HEK293 (cell line): ENCODE measurements at regions of chr1 and their contacts with region 1.

Region 1: GRCh38 chr1:110209715-110210603 is at the start of gene KCNC4:
- H3K4me3 ChIP-seq: peak within 1 kb of the TSS; percentile 56
- H3K27ac ChIP-seq: peak within 1 kb of the TSS; percentile 78
- H3K4me1 ChIP-seq: peaks cover 7% of the 10 kb centered on the region
- CTCF ChIP-seq: no peak

Region 2: GRCh38 chr1:110119837-110120236 is 90.1 kb before region 1 on chr1:
- CTCF ChIA-PET with region 1: no interaction called
- POLR2A ChIA-PET with region 1: no interaction called
- H3K4me3 ChIP-seq: no peak overlapping the region
- H3K27ac ChIP-seq: no peak overlapping the region
- H3K4me1 ChIP-seq: no peaks in the 10 kb centered on the region
- CTCF ChIP-seq: no peak

Region 3: GRCh38 chr1:110235834-110236682 is 26.1 kb after region 1 on chr1:
- CTCF ChIA-PET with region 1: interaction called, 17 read pairs
- POLR2A ChIA-PET with region 1: no interaction called
- H3K4me3 ChIP-seq: no peak overlapping the region
- H3K27ac ChIP-seq: no peak overlapping the region
- H3K4me1 ChIP-seq: peaks cover 2% of the 10 kb centered on the region; the same call in 1 of the 2 replicates
- CTCF ChIP-seq: no peak

Region 4: GRCh38 chr1:110272045-110272444 is 62.1 kb after region 1 on chr1:
- CTCF ChIA-PET with region 1: interaction called, 10 read pairs
- POLR2A ChIA-PET with region 1: no interaction called
- H3K4me3 ChIP-seq: no peak overlapping the region
- H3K27ac ChIP-seq: no peak overlapping the region
- H3K4me1 ChIP-seq: no peaks in the 10 kb centered on the region
- CTCF ChIP-seq: no peak

Region 5: GRCh38 chr1:110298991-110299390 is 89.0 kb after region 1 on chr1:
- CTCF ChIA-PET with region 1: interaction called, 24 read pairs
- POLR2A ChIA-PET with region 1: no interaction called
- H3K4me3 ChIP-seq: no peak overlapping the region
- H3K27ac ChIP-seq: no peak overlapping the region
- H3K4me1 ChIP-seq: no peaks in the 10 kb centered on the region
- CTCF ChIP-seq: no peak

Region 6: GRCh38 chr1:110319332-110320152 is 109.6 kb after region 1 on chr1:
- CTCF ChIA-PET with region 1: interaction called, 662 read pairs
- POLR2A ChIA-PET with region 1: no interaction called
- H3K4me3 ChIP-seq: no peak overlapping the region
- H3K27ac ChIP-seq: no peak overlapping the region
- H3K4me1 ChIP-seq: no peaks in the 10 kb centered on the region
- CTCF ChIP-seq: no peak

Region 7: GRCh38 chr1:110433803-110434202 is 223.8 kb after region 1 on chr1:
- CTCF ChIA-PET with region 1: interaction called, 12 read pairs
- POLR2A ChIA-PET with region 1: interaction called, 3 read pairs
- H3K4me3 ChIP-seq: no peak overlapping the region
- H3K27ac ChIP-seq: no peak overlapping the region
- H3K4me1 ChIP-seq: no peaks in the 10 kb centered on the region
- CTCF ChIP-seq: no peak; the same call in 1 of the 2 replicates